SK-N-SH (cell line): ENCODE measurements at regions of chr5 and their contacts with region 1.

Region 1: DNA sequence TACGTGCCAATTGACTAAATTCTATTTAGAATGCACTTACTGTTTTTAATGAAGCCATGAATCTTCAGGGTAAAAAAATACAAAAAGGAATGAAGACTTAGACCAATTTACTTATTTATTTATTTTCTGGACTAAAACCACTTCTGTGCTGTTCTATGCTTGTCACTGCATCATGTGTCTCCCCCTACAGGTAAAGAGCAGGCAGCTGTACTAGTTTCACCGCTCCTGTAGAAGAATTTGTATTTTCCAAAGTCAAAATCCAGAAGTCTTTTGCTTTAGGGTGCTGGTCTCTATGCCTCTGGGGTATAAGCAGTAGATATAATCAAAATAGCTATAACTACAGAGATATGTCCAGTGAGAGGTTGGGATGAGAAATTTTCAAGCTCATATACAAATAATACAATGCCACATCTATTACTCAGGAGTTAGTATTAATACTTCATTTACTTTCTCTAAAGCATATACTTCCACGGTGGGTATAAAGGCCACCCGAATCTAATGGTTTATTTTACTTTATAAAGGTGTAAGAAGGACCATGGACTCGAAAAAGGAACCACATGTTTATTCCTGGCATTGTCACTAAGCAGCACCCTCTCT is 591.5 kb downstream of the RAB3C start:
- DNase-seq: peak; percentile 54
- H3K4me3 ChIP-seq: peak overlapping the region in 1 of 2 experiments; percentile 51; a peak in 1 of 4 replicates
- H3K27ac ChIP-seq: no peak overlapping the region
- H3K4me1 ChIP-seq: peaks cover 0 to 5% of the 10 kb centered on the region in 2 experiments; a peak in 2 of 4 replicates
- H3K27me3 ChIP-seq: no peaks in the 10 kb centered on the region
- CTCF ChIP-seq: peak; percentile 97
- EP300 ChIP-seq: no peak
- RAD21 ChIP-seq: peak; percentile 93

Region 2: GRCh38 chr5:58893551-58893950 is 280.8 kb before region 1 on chr5:
- CTCF ChIA-PET with region 1: interaction called, 35 read pairs
- POLR2A ChIA-PET with region 1: no interaction called
- DNase-seq: no peak
- H3K4me3 ChIP-seq: no peak overlapping the region
- H3K27ac ChIP-seq: no peak overlapping the region
- H3K4me1 ChIP-seq: peaks cover 0 to 9% of the 10 kb centered on the region in 2 experiments; a peak in 1 of 4 replicates
- H3K27me3 ChIP-seq: no peaks in the 10 kb centered on the region
- CTCF ChIP-seq: no peak
- EP300 ChIP-seq: no peak
- RAD21 ChIP-seq: no peak

Region 3: GRCh38 chr5:59027145-59027907 is 147.0 kb before region 1 on chr5:
- CTCF ChIA-PET with region 1: interaction called, 96 read pairs
- POLR2A ChIA-PET with region 1: no interaction called
- DNase-seq: no peak
- H3K4me3 ChIP-seq: no peak overlapping the region
- H3K27ac ChIP-seq: no peak overlapping the region
- H3K4me1 ChIP-seq: peaks cover 0 to 3% of the 10 kb centered on the region in 2 experiments; a peak in 1 of 4 replicates
- H3K27me3 ChIP-seq: no peaks in the 10 kb centered on the region
- CTCF ChIP-seq: no peak
- EP300 ChIP-seq: no peak
- RAD21 ChIP-seq: no peak

Region 4: GRCh38 chr5:59133682-59134261 is 40.6 kb before region 1 on chr5:
- CTCF ChIA-PET with region 1: interaction called, 31 read pairs
- POLR2A ChIA-PET with region 1: no interaction called
- DNase-seq: no peak
- H3K4me3 ChIP-seq: no peak overlapping the region
- H3K27ac ChIP-seq: peak overlapping the region; percentile 9 to 73; a peak in 3 of 4 replicates
- H3K4me1 ChIP-seq: peaks cover 0 to 11% of the 10 kb centered on the region in 2 experiments; a peak in 3 of 4 replicates
- H3K27me3 ChIP-seq: no peaks in the 10 kb centered on the region
- CTCF ChIP-seq: no peak
- EP300 ChIP-seq: no peak
- RAD21 ChIP-seq: no peak

Region 5: DNA sequence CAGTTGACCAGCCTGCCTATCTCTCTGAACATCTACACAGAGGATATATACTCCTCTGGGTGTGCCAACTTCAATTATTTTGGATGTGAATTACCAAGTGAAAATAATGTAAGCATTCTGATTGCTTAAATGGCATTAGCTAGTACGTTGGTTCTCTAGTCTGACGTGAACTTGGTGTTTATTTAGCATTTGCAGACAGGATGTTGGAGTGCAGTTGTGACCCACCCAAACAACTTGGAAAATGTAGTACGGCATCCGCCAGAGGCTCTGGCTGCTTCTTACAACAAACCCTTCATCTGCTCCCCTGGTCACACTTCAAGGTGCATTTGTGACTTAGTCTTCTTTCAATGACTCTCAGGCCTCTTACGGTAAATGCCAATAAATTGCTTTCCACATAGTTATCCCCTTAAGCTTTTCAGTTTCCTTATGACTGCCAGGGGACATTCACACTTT is 102.6 kb after region 1 on chr5:
- CTCF ChIA-PET with region 1: no interaction called
- POLR2A ChIA-PET with region 1: no interaction called
- DNase-seq: no peak
- H3K4me3 ChIP-seq: no peak overlapping the region
- H3K27ac ChIP-seq: no peak overlapping the region
- H3K4me1 ChIP-seq: peaks cover 0 to 2% of the 10 kb centered on the region in 2 experiments; a peak in 1 of 4 replicates
- H3K27me3 ChIP-seq: no peaks in the 10 kb centered on the region
- CTCF ChIP-seq: no peak
- EP300 ChIP-seq: no peak
- RAD21 ChIP-seq: no peak

Region 6: DNA sequence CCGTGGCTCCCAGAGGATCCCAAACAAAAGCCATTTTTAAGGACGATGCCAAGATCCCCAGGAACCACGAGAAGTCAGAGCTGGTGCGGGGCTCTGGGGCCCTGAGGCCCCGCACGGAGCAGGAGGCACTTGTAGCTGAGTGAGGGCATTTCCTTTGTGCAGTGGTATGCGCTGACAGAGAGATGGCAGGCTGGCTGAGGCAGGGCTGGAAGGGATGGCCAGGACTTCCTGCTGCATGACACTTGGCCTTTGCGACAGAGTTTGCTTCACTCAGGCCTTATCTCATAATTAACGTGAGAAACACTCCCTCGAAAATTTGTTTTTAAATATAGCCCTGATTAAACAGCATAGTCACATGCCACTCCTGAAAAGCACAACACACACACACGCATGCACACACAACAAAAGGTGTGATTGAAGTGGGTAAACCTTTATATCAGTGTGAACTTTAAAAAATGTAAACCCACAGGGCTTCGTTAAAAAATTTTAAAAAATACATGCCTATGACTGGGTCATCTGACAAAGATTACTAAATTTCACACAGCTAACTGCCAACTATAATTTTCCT is 182.6 kb after region 1 on chr5:
- CTCF ChIA-PET with region 1: no interaction called
- POLR2A ChIA-PET with region 1: no interaction called
- DNase-seq: no peak
- H3K4me3 ChIP-seq: no peak overlapping the region
- H3K27ac ChIP-seq: no peak overlapping the region
- H3K4me1 ChIP-seq: peaks cover 0 to 13% of the 10 kb centered on the region in 2 experiments; a peak in 2 of 4 replicates
- H3K27me3 ChIP-seq: no peaks in the 10 kb centered on the region
- CTCF ChIP-seq: no peak
- EP300 ChIP-seq: no peak
- RAD21 ChIP-seq: no peak

Region 7: GRCh38 chr5:59367791-59368394 is 193.5 kb after region 1 on chr5:
- CTCF ChIA-PET with region 1: interaction called, 13 read pairs
- POLR2A ChIA-PET with region 1: no interaction called
- DNase-seq: peak; percentile 39
- H3K4me3 ChIP-seq: no peak overlapping the region; a peak in 1 of 4 replicates
- H3K27ac ChIP-seq: no peak overlapping the region
- H3K4me1 ChIP-seq: no peaks in the 10 kb centered on the region; a peak in 2 of 4 replicates
- H3K27me3 ChIP-seq: no peaks in the 10 kb centered on the region
- CTCF ChIP-seq: peak; percentile 83
- EP300 ChIP-seq: no peak
- RAD21 ChIP-seq: peak; percentile 89